Heart left ventricle (tissue), 16 donors: ENCODE measurements at regions of chr1 and their contacts with region 1.

Region 1: GRCh38 chr1:161098210-161099068 is at the start of gene KLHDC9:
- DNase-seq: peak; percentile 79 to 88 (median 82)
- ATAC-seq: peak; percentile 80 to 90 (median 84)
- H3K4me3 ChIP-seq: peak within 1 kb of the TSS; percentile 49 to 81 (median 64)
- H3K27ac ChIP-seq: peak within 1 kb of the TSS in 11 of 12 donors; percentile 40 to 83 (median 71)
- H3K4me1 ChIP-seq: peaks cover 2 to 35% (median 17%) of the 10 kb centered on the region in 12 donors
- H3K27me3 ChIP-seq: no peaks in the 10 kb centered on the region
- CTCF ChIP-seq: peak in 1 of 12 donors; percentile 15
- POLR2A ChIP-seq: no peak
- total RNA-seq, gene KLHDC9: 2.4 to 13.3 (median 6.1) TPM

Region 2: DNA sequence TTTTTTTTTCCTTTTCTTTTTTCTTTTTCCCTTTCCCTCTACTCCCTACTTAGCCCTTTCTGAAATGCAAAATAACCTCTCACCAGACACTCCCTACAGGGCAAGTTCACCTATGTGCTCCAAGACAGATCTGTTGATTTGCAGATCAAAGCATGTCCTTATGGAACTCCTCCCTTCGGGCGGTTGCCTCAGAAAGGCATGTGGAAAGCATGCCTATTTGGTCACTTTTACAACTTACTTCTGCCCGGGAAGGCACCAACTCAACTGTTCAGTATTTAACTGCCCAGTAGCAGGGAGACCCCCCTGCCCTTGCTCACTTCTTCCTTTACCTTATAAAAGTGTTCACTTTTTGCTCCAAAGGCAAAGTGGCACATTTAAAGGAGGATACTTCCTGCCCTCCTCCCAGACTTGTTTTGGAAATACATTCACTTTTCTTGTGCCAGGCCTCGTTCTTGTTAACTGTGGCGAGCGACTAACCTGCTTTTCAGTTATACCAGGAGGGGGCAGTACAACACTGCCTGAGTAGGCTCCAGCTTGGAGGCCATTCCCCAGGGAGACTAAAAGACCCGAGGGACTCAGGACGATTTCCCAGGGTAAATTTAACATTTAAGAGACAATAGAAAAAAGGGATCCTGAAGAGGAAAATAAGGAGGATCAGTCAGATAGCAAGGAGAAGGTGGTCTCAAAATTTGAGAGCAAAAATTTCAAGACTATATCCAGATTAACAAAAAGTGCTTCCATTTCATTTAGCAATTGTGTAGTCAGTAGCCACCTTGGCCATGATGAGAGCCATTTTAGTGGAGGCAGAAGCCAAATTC is 371.7 kb before region 1 on chr1:
- intact Hi-C with region 1: loop called in 1 of 10 experiments (anchors 10 kb)
- DNase-seq: peak in 4 of 5 donors; percentile 34 to 56 (median 47)
- ATAC-seq: peak; percentile 67 to 81 (median 72)
- H3K4me3 ChIP-seq: no peak overlapping the region
- H3K27ac ChIP-seq: peak overlapping the region in 1 of 12 donors; percentile 43
- H3K4me1 ChIP-seq: peaks cover 0 to 30% (median 0%) of the 10 kb centered on the region in 12 donors
- H3K27me3 ChIP-seq: peaks cover 0 to 6% (median 0%) of the 10 kb centered on the region in 9 donors
- CTCF ChIP-seq: peak; percentile 56 to 84 (median 69)
- POLR2A ChIP-seq: no peak

Region 3: DNA sequence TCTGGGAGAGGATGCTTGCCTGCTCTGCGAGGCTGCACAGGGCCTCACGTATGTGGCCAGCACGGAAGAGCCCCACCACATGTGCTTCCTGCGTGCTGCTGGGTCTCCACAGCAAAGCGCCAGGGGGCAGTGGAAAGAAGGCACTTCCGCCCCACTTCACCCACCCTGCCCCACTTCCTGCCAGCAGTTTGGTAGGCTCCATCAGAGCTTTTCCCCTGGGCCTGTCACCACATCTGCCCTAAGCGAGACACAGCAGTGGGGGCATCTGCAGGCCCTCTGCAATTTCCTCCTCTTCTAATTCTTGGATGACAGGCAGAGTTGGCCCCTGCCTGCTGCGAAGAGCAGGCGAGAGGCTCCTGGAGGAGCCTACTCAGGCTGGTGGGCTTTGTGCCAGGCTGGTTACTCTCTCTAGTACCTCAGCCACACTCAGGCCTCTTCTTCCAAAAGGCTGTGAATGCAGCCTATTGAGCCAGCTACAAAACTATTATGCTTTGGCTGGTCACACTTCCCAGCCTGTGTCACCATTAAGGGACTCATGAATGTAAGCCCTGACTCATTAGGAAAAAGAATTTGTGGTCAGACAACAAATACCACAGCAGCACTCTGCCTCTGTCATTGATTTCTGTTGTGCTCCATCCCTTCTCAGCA is 260.8 kb before region 1 on chr1:
- intact Hi-C with region 1: loop called in 5 of 10 experiments (anchors 2 to 10 kb)
- DNase-seq: peak; percentile 18 to 82 (median 35)
- ATAC-seq: peak in 2 of 4 donors; percentile 48 to 77
- H3K4me3 ChIP-seq: no peak overlapping the region
- H3K27ac ChIP-seq: peak overlapping the region in 2 of 12 donors; percentile 7 to 80
- H3K4me1 ChIP-seq: peaks cover 0 to 38% (median 0%) of the 10 kb centered on the region in 12 donors
- H3K27me3 ChIP-seq: peaks cover 0 to 4% (median 0%) of the 10 kb centered on the region in 9 donors
- CTCF ChIP-seq: peak in 1 of 12 donors; percentile 17
- POLR2A ChIP-seq: no peak